Posterior vena cava (tissue), 2 donors: ENCODE measurements at regions of chr12 and their contacts with region 1.

Region 1: GRCh38 chr12:93839064-93839463 is 161.9 kb downstream of the CRADD start:
- DNase-seq: no peak

Region 2: GRCh38 chr12:93857991-93858447 is 19.0 kb after region 1 on chr12:
- intact Hi-C with region 1: loop called in 1 of 2 experiments (anchors 1 kb)
- DNase-seq: no peak